Activated naive CD4-positive, alpha-beta T cell treated with anti-CD3 and anti-CD28 coated beads, Interleukin-2, amount 10 ng/mL, durations not matched to agents 7 days and 5 days (primary cell): ENCODE measurements at regions of chr14 and their contacts with region 1.

Region 1: DNA sequence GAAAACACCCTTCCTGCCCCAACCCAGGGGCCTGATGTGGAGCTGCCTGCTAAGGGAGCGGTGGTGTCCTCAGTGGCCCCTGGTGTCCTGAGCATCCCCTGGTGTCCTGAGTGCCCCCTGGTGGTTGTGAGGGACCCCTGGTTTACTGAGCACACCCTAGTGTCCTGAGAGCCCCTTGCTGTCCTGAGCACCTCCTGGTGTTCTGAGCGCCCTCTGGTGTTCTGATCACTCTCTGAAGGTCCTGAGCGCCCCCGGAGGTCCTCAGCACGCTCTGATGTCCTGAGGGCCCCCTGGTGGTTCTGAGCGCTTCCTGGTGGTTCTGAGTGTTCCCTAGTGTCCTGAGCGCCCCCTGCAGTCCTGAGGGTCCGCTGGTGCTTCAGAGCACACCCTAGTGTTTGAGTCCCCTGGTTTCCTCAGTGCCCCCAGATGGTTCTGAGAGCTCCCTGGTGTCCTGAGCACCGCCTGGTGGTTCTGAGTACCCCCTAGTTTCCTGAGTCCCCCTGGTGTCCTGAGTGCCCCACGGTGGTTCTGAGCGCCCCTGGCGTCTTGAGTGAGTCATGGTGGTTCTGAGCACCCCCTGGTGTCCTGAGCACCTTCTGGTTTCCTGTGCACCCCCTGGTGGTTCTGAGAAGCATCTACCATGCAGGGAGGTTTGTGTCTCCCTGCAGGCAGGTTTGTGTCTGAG is 1004.2 kb downstream of the TMEM121 start:
- DNase-seq: peak; percentile 45
- H3K4me3 Mint-ChIP-seq: no peak overlapping the region
- H3K27ac Mint-ChIP-seq: no peak overlapping the region
- H3K4me1 Mint-ChIP-seq: peaks cover 6% of the 10 kb centered on the region
- H3K27me3 Mint-ChIP-seq: peaks cover 44% of the 10 kb centered on the region

Region 2: GRCh38 chr14:106436310-106436905 is 94.2 kb before region 1 on chr14:
- CTCF ChIA-PET with region 1: interaction called, 13 read pairs
- DNase-seq: peak; percentile 64
- H3K4me3 Mint-ChIP-seq: no peak overlapping the region
- H3K27ac Mint-ChIP-seq: no peak overlapping the region
- H3K4me1 Mint-ChIP-seq: peaks cover 6% of the 10 kb centered on the region
- H3K27me3 Mint-ChIP-seq: peaks cover 38% of the 10 kb centered on the region

Region 3: DNA sequence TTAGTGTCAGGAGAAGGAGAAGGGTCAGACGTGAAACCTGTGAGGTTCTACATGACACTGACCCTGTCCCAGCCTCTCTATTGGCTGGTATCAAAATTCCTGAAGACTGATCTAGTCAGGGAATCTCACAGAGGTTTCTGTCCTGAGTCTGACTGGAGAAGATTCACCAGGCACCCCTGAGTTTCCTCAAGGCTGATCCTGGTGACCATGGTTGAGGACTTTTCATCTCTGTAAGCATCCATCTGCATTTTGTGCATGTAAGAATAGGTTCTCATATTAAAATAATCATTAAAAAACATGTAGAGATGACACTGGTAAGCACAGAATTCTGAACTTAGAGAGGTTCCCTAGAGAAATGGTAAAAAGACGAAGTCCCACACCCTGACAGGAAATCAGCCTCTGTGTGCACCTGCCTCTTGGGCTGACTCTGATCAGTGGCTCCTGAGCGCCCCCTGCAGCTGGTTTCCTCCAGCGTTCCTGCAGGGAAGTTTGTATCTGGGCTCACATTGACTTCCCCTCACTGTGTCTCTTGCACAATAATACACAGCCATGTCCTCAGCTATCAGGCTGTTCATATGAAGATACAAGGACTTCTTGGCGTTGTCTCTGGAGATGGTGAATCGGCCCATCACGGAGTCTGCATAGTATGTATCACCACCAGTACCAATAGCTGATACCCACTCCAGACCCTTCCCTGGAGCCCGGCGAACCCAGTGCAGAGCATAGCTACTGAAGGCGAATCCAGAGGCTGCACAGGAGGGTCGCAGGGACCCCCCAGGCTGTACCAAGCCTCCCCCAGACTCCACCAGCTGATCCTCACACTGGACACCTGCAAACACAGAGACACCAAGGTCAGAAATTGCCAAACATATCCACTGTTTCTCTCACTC is 12.3 kb before region 1 on chr14:
- CTCF ChIA-PET with region 1: interaction called, 37 read pairs
- DNase-seq: peak; percentile 89
- H3K4me3 Mint-ChIP-seq: no peak overlapping the region
- H3K27ac Mint-ChIP-seq: no peak overlapping the region
- H3K4me1 Mint-ChIP-seq: peaks cover 15% of the 10 kb centered on the region
- H3K27me3 Mint-ChIP-seq: peaks cover 21% of the 10 kb centered on the region

Region 4: DNA sequence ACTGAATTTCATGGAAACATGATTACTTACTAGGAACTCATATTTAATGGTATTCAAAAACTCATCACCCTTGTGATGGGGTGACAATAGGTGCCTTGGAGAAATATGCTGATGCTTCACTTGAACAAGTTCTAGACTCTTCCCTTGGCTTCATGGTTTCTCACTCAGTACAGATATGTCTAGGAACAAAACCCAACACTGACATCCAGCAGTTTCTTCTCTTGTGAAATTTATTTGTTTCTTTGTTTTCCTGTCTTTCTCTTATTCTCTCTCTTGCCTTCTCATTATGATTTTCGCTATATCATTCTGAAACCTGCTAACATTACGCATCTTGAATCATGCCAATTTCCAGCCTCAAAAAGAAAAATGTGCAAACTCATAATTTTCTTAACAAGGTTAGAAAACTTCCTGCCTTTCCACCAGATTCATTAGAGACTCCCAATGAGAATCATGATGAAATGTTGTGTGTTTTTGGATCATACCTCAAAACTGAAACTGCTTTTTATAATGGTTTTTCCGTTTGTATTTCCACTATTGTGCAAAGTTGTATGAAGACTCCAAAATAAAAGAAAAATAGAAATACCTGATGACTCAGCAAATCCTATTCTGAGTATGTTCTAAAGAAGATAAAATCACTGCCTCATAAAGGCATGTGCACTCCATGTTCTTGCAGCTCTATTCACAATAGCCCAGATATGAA is 17.3 kb after region 1 on chr14:
- CTCF ChIA-PET with region 1: interaction called, 14 read pairs
- DNase-seq: no peak
- H3K4me3 Mint-ChIP-seq: no peak overlapping the region
- H3K27ac Mint-ChIP-seq: no peak overlapping the region
- H3K4me1 Mint-ChIP-seq: peaks cover 6% of the 10 kb centered on the region
- H3K27me3 Mint-ChIP-seq: peaks cover 27% of the 10 kb centered on the region

Region 5: GRCh38 chr14:106564058-106564656 is 33.6 kb after region 1 on chr14:
- CTCF ChIA-PET with region 1: interaction called, 10 read pairs
- DNase-seq: peak; percentile 80
- H3K4me3 Mint-ChIP-seq: no peak overlapping the region
- H3K27ac Mint-ChIP-seq: no peak overlapping the region
- H3K4me1 Mint-ChIP-seq: no peaks in the 10 kb centered on the region
- H3K27me3 Mint-ChIP-seq: peaks cover 46% of the 10 kb centered on the region